ENCODE measurements at regions of chr12 and their contacts with region 1.

Region 1: DNA sequence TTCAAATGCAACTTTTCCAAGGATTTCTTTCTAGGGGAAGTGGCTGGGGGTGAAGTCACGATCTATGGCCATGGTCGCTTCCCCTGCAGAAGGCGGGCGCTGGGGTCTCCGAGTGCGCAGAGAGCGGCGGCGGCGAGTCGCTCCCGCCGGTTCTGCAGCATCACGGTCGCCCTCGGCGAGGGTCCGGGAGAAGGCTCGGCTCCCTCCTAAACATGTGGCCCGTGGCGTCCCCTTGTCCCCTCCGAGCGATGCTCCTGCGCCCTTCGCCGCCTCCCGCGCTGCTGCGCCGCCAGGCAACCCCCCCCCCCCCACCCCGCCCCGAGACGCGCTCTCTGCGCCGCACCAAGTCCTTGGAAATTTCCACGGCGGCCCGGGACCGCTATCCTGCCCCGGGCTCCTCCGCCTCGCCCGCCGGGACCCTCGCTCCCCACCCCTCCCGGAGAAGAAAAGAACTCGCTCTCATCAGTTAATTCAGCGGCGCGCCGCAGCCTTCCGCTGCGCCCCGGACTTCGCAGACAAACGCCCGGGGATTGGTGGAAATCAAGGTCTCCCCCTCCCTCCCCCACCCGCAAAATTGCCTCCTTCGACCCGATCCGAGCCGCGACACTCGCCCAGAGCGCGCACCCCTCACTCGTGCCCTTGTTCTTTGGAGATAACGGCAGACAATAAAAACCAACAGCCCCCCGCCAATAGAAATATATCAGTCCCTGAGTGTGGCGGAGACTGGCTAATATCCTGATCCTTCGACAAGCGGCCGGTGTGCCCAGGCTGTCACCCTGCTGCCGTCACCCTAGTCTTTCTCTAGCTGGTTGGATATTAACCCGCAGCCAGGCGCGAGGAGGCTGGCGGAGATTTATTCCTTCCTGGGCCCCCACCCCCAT is at the start of gene ST8SIA1:
- DNase-seq: no peak
- H3K4me3 ChIP-seq: peak within 1 kb of the TSS; percentile 70 to 78
- H3K27ac ChIP-seq: peak within 1 kb of the TSS; percentile 83
- H3K4me1 ChIP-seq: peaks cover 29% of the 10 kb centered on the region
- H3K27me3 ChIP-seq: no peaks in the 10 kb centered on the region
- CTCF ChIP-seq: no peak
- POLR2A ChIP-seq: no peak
- total RNA-seq, gene ST8SIA1: 5.2 TPM

Region 2: GRCh38 chr12:22083167-22083566 is 251.5 kb before region 1 on chr12:
- intact Hi-C with region 1: loop called (anchors 5 kb)
- DNase-seq: no peak
- H3K4me3 ChIP-seq: no peak overlapping the region
- H3K27ac ChIP-seq: no peak overlapping the region
- H3K4me1 ChIP-seq: no peaks in the 10 kb centered on the region
- H3K27me3 ChIP-seq: no peaks in the 10 kb centered on the region
- CTCF ChIP-seq: peak; percentile 21 to 56 (median 49)
- POLR2A ChIP-seq: no peak

Region 3: DNA sequence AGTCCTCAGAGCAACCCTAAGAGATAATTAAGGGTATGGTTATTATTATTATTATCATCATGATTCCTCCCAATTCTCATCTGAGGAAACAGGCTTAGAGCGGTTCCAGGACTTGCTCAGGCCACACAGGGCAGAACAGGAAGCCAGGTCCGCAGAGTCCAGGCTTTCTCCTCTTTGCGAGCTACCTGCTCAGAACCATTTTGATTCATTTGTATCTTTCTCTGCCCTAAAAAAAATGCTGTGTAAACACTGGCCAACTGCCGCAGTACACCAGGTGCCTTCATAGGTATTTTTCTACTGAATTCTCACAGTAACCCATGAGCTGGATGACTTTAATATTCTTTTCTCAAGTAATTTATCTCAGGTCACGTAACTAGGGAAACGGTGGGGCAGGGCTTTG is 45.4 kb before region 1 on chr12:
- intact Hi-C with region 1: loop called (anchors 1 kb)
- DNase-seq: no peak
- H3K4me3 ChIP-seq: no peak overlapping the region
- H3K27ac ChIP-seq: no peak overlapping the region
- H3K4me1 ChIP-seq: peaks cover 6% of the 10 kb centered on the region
- H3K27me3 ChIP-seq: no peaks in the 10 kb centered on the region
- CTCF ChIP-seq: no peak
- POLR2A ChIP-seq: no peak

Region 4: GRCh38 chr12:22443379-22444316 is 109.0 kb after region 1 on chr12:
- intact Hi-C with region 1: loop called (anchors 10 kb)
- DNase-seq: no peak
- H3K4me3 ChIP-seq: no peak overlapping the region
- H3K27ac ChIP-seq: no peak overlapping the region
- H3K4me1 ChIP-seq: no peaks in the 10 kb centered on the region
- H3K27me3 ChIP-seq: no peaks in the 10 kb centered on the region
- CTCF ChIP-seq: peak; percentile 17 to 70 (median 60)
- POLR2A ChIP-seq: no peak